ENCODE measurements at regions of chr12 and their contacts with region 1.

Region 1: DNA sequence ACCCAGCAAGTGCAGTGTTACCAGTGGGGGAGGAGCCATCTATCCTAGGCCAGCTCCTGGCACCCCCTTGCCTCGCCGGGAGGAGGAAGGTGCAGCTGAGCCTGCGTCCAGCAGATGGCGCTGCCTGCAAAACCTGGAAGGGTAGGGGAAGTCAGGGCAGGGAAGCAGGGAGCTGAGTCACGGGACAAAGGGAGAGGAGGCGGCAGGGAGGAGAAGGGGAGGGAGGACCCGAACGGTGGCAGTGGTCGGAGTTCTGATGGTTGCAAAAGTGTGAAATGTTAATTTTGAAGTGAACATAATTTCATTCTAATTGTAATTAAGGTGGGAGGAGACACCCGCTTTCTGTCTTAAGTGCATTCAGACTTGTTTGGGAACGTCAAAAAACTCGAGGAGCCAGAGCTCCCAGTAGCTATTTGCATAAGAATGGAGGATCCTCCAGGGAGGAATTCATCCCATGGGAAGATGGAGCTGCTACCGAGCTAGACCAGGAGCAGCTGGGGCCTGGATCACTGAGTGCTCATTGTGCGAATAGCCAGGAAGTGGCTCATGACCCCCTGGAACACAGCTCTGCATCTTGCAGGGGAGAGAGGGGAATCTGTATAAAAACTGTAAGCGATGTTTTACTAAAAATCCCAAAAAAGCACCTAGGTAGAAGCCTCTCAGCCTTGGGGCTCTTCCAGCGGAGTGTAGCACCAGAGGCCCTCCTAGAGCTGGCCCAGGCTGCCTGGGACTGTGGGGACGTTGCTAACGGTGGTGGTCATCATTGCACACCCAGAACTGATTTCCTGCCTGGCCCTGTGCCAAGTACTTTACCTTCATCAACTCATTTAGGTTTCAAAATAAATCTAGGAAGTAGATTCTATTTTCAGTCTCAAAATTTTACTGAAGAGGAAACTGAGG is 59.5 kb downstream of the EMP1 start:
- DNase-seq: peak; percentile 93
- H3K4me3 Mint-ChIP-seq: peak overlapping the region; percentile 11
- H3K27ac Mint-ChIP-seq: no peak overlapping the region
- H3K4me1 Mint-ChIP-seq: peaks cover 5% of the 10 kb centered on the region
- H3K27me3 Mint-ChIP-seq: no peaks in the 10 kb centered on the region

Region 2: GRCh38 chr12:12654691-12655460 is 601.2 kb before region 1 on chr12:
- CTCF ChIA-PET with region 1: no interaction called
- intact Hi-C with region 1: no loop called
- DNase-seq: no peak
- H3K4me3 Mint-ChIP-seq: no peak overlapping the region
- H3K27ac Mint-ChIP-seq: no peak overlapping the region
- H3K4me1 Mint-ChIP-seq: peaks cover 7% of the 10 kb centered on the region
- H3K27me3 Mint-ChIP-seq: no peaks in the 10 kb centered on the region

Region 3: DNA sequence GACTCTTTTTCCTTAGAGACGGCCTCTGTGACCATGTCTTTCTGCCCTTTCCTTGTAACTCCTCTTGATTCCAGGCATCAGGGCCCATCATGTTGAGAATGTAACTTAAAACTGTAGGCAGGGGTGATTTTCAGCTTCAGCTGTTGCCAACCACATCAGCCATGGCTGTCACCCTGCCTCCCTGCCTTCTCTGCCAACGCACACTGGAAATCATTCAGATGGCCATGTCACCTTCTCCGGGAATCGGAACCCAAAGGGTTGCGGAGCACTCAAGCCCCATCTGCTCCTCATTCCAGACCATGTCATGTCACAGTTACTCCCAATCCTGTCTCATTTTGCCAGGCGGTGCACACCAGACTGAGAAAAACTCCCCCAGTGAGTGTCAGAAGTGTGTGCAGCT is 12.5 kb after region 1 on chr12:
- CTCF ChIA-PET with region 1: interaction called, 19 read pairs
- intact Hi-C with region 1: no loop called
- DNase-seq: no peak
- H3K4me3 Mint-ChIP-seq: no peak overlapping the region
- H3K27ac Mint-ChIP-seq: no peak overlapping the region
- H3K4me1 Mint-ChIP-seq: no peaks in the 10 kb centered on the region
- H3K27me3 Mint-ChIP-seq: peaks cover 2% of the 10 kb centered on the region

Region 4: GRCh38 chr12:13299457-13299856 is 43.4 kb after region 1 on chr12:
- CTCF ChIA-PET with region 1: interaction called, 14 read pairs
- intact Hi-C with region 1: no loop called
- DNase-seq: no peak
- H3K4me3 Mint-ChIP-seq: no peak overlapping the region
- H3K27ac Mint-ChIP-seq: no peak overlapping the region
- H3K4me1 Mint-ChIP-seq: no peaks in the 10 kb centered on the region
- H3K27me3 Mint-ChIP-seq: peaks cover 10% of the 10 kb centered on the region

Region 5: DNA sequence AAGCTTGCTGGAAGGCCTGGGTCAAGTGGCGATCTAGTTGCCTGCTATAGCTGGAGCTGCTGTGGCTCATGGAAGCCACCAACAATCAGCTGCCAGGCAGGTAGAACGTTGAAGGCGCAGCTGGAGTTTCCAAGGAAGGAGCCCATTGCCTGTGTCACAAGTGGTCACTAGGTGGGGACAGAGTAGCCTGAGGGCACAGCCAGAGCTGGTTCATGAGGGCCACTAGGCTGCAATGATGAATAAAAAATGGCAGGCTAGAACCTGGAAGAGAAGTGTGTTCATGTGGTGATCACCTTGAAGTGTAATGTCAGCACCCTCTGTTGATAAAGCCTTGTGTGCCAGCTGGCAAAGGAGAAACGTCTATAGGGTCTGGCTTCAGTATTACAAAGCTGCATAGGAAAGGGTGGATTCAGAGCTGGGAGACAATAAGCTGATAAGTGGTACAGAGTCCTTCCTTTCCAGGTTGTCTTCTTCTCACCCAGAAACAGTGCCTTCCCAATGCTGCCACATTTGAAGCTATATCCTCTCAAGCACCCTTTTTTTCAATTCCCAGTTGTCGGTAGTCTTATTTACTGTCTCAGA is 106.3 kb after region 1 on chr12:
- CTCF ChIA-PET with region 1: interaction called, 6 read pairs
- intact Hi-C with region 1: loop called (anchors 5 kb)
- DNase-seq: peak; percentile 75
- H3K4me3 Mint-ChIP-seq: no peak overlapping the region
- H3K27ac Mint-ChIP-seq: no peak overlapping the region
- H3K4me1 Mint-ChIP-seq: no peaks in the 10 kb centered on the region
- H3K27me3 Mint-ChIP-seq: peaks cover 15% of the 10 kb centered on the region

Region 6: DNA sequence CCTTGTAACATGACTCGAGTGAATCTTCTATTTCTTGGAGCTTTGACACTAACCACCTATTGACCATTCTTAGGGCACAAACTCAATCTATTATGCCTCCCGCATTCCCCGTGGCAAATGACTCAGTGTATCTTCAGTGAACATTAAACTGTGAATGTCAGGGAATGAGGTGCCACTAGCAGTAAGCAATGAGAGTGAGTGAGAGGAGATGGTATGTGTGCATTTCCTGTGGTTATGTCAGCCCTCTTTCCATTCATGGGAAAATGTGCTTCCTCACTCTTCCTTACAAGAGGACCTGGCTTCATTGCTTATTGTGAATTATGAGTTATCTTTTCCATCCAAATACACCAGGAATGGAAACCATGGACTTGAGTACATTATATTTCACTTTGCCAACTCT is 169.7 kb after region 1 on chr12:
- CTCF ChIA-PET with region 1: no interaction called
- intact Hi-C with region 1: no loop called
- DNase-seq: no peak
- H3K4me3 Mint-ChIP-seq: no peak overlapping the region
- H3K27ac Mint-ChIP-seq: no peak overlapping the region
- H3K4me1 Mint-ChIP-seq: no peaks in the 10 kb centered on the region
- H3K27me3 Mint-ChIP-seq: peaks cover 3% of the 10 kb centered on the region

Region 7: DNA sequence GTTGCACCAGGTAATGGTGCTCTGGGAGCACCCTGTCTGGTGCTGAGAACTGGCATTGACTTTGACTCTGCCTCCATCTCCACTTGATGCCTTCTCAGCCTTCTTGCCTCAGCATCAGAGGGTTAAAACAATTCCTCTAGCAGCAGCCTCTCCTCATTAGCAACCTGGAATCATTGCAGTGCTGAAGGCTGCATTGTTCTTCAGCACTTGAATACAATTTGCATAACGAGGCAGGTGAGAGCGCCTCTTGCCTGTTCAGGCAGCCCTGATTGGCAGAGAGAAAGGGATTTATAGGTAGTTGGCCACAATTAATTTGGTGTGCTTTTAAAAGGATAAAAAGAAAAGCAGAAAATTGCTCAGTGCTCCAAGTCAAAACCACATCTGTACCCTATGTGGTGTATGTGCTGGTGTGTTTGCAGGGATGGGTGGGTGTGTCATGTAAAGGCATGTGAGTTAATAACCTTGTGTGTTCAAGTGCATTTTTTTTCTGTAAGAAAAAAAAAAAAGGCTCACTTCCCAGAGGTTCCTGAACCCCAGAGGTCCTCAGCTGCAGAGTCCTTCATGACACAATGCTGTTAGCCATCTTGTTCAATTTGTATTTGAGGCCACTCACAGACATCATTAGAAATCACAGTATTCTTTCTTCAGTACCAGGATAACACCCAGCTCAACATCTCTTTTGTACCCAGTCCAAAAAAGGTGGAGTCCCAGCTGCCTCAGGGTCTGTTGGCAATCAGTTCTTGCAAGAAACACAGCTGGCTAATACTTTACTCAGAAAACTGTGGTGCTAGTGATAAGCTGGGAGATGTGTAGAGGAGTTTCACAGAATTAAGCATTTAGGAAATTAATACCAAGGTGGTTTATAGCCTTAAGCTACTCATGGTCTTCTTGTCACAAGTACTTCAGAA is 339.7 kb after region 1 on chr12:
- CTCF ChIA-PET with region 1: interaction called, 12 read pairs
- intact Hi-C with region 1: no loop called
- DNase-seq: no peak
- H3K4me3 Mint-ChIP-seq: no peak overlapping the region
- H3K27ac Mint-ChIP-seq: no peak overlapping the region
- H3K4me1 Mint-ChIP-seq: no peaks in the 10 kb centered on the region
- H3K27me3 Mint-ChIP-seq: peaks cover 5% of the 10 kb centered on the region

Region 8: GRCh38 chr12:13941258-13942249 is 685.5 kb after region 1 on chr12:
- CTCF ChIA-PET with region 1: no interaction called
- intact Hi-C with region 1: loop called (anchors 5 kb)
- DNase-seq: peak; percentile 18
- H3K4me3 Mint-ChIP-seq: no peak overlapping the region
- H3K27ac Mint-ChIP-seq: no peak overlapping the region
- H3K4me1 Mint-ChIP-seq: no peaks in the 10 kb centered on the region
- H3K27me3 Mint-ChIP-seq: peaks cover 25% of the 10 kb centered on the region